ENCODE measurements at regions of chr15 and their contacts with region 1.

Region 1: DNA sequence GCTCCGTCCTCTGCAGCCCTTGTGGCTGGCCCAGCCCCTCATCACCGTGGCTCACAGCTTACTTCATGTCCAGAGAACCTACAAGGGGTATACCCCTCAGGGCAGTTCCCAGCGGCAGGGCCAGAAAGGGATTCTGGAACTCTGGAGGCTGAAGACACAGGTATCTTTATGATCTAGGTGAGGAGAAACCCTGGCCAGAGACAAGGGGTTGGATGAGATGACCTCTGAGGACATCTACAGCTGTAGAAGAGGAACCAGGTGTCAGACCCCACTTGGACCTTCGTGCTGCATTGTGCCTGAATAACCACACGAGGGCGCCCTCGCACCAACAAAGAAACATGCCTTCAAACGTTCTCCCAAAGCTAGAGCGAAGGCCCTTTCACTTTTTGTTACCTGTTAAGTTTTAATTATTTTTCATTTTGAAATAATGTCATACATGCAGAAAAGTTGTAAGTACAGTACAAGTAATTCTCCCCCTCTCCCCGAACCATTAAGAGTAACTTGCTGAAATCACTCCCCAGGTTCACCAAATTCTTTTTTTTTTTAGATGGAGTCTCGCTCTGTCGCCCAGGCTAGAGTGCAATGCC is 118.7 kb upstream of the SMAD3 start:
- DNase-seq: peak; percentile 83 to 92
- ATAC-seq: peak; percentile 72 to 77
- H3K4me3 ChIP-seq: no peak overlapping the region
- H3K27ac ChIP-seq: peak overlapping the region; percentile 60 to 82
- H3K4me1 ChIP-seq: peaks cover 39% of the 10 kb centered on the region
- CTCF ChIP-seq: peak; percentile 98
- EP300 ChIP-seq: no peak
- POLR2A ChIP-seq: no peak
- RAD21 ChIP-seq: peak; percentile 99

Region 2: DNA sequence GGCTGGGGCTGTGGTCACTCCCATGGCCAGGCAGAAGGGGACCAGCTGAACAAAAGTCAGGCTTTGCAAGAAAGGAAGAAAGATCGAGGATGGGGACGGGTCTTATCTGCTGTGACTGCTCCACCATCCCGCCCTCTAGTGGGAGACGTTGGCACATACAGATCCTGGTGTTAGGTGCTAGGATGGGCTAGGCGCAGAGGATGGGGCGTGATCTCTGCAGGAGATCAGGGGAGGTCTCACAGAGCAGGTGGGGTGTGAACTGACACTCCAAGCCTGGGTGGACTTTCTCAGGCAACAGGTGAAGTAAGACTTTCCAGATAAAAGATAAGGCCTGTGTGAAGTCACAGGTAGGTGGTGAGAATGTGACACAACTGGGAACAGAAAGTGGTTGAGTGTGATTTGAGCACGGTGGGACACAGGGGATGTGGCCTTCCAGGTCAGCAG is 23.2 kb before region 1 on chr15:
- CTCF ChIA-PET with region 1: interaction called, 18 read pairs
- POLR2A ChIA-PET with region 1: interaction called, 4 read pairs
- DNase-seq: peak; percentile 58 to 64
- ATAC-seq: peak; percentile 64 to 87; a peak in 3 of 6 replicates
- H3K4me3 ChIP-seq: no peak overlapping the region
- H3K27ac ChIP-seq: peak overlapping the region in 1 of 2 experiments; percentile 31; a peak in 2 of 6 replicates
- H3K4me1 ChIP-seq: peaks cover 16% of the 10 kb centered on the region
- CTCF ChIP-seq: peak; percentile 45; the same call in 2 of the 3 replicates
- EP300 ChIP-seq: no peak
- POLR2A ChIP-seq: no peak
- RAD21 ChIP-seq: peak; percentile 28 to 58; a peak in 4 of 5 replicates

Region 3: GRCh38 chr15:67013696-67014095 is 67.0 kb after region 1 on chr15:
- CTCF ChIA-PET with region 1: interaction called, 12 read pairs
- POLR2A ChIA-PET with region 1: no interaction called
- DNase-seq: no peak
- ATAC-seq: no peak
- H3K4me3 ChIP-seq: no peak overlapping the region
- H3K27ac ChIP-seq: no peak overlapping the region
- H3K4me1 ChIP-seq: peaks cover 12% of the 10 kb centered on the region; the same call in 1 of the 3 replicates
- CTCF ChIP-seq: no peak
- EP300 ChIP-seq: no peak
- POLR2A ChIP-seq: no peak
- RAD21 ChIP-seq: no peak

Region 4: DNA sequence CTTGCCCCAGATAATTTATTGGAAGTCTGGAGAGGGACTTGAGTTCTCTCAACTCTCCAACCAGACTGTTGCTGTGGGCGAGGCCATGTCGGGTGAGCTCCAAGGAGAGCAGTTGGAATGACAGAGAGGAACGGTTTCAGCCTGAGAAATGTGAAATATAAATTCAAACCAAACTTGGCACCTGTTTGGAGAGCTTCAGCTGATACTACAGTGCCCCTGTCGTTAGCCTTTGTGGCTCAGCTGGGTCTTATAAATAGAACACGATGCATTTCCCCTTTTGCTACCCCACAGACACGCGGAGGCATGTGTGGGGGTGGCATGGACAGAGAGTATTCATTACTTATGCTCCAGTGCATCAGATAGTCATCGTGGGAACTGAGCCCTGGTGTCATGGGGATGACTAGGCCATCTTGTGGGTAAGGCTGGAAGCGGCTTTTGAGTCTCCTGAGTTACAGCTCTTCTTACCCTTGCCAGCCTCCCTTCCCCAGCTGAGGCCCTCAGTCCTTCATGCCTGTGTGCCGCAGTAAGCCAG is 134.3 kb after region 1 on chr15:
- CTCF ChIA-PET with region 1: interaction called, 18 read pairs
- POLR2A ChIA-PET with region 1: no interaction called
- DNase-seq: peak in 1 of 2 experiments; percentile 71
- ATAC-seq: peak in 1 of 2 experiments; percentile 7; a peak in 2 of 6 replicates
- H3K4me3 ChIP-seq: no peak overlapping the region
- H3K27ac ChIP-seq: peak overlapping the region in 1 of 2 experiments; percentile 62; a peak in 4 of 6 replicates
- H3K4me1 ChIP-seq: peaks cover 99% of the 10 kb centered on the region
- CTCF ChIP-seq: peak; percentile 31; the same call in 2 of the 3 replicates
- EP300 ChIP-seq: no peak
- POLR2A ChIP-seq: no peak
- RAD21 ChIP-seq: peak in 1 of 2 experiments; percentile 32; a peak in 3 of 5 replicates

Region 5: DNA sequence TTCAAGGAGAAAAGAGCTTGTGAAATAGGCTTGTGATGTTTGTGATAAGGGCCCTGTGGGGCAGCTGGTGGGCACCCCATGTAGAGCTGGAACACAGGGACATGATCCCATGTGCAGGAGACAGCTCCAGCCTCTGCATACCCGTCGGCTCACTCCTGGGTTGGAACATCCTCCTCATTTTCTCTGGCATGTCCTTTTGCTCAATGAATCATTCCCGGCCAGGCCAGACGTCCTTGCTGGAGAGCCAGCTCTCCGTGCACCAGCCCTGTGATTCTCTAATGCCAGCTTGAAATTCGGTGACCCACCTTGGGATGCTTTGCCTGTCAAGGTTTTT is 196.1 kb after region 1 on chr15:
- CTCF ChIA-PET with region 1: interaction called, 28 read pairs
- POLR2A ChIA-PET with region 1: no interaction called
- DNase-seq: peak in 1 of 2 experiments; percentile 71
- ATAC-seq: peak; percentile 35 to 45
- H3K4me3 ChIP-seq: no peak overlapping the region
- H3K27ac ChIP-seq: peak overlapping the region; percentile 92
- H3K4me1 ChIP-seq: peaks cover 100% of the 10 kb centered on the region
- CTCF ChIP-seq: no peak
- EP300 ChIP-seq: no peak
- POLR2A ChIP-seq: no peak
- RAD21 ChIP-seq: no peak

Region 6: DNA sequence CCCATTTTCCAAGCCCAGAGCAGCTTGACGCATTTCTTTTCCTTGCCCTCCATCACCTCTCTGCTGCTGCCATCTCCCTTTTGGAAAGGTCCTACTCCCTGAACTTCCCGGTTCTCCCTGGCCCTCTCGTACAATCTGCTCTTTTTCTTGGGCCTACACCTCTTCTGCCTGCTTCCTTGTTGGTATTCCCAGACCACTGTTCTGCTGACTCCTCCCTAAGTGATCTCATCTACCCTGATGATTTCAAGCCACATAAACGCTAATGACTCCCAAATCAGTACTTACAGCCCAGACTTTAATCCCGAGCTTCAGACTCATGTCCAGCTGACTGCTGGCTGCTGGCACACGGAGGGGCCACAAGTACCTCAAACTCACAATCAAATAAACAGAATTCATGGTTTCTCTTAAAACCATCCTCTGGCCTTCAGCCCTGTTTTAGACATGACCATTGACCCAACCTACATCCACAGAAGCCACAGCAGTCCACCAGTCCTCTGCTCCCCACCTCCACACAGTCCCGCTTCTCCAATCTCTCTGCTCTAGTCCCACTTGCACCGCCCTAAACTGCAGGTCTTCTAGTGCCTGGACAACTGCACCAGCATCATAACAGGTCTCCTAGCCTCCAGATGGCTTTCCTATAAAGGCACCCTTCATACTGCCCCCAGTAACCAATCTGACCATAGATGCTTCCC is 250.1 kb after region 1 on chr15:
- CTCF ChIA-PET with region 1: interaction called, 63 read pairs
- POLR2A ChIA-PET with region 1: no interaction called
- DNase-seq: peak in 1 of 2 experiments; percentile 64
- ATAC-seq: peak; percentile 12 to 45; a peak in 4 of 6 replicates
- H3K4me3 ChIP-seq: no peak overlapping the region
- H3K27ac ChIP-seq: peak overlapping the region in 1 of 2 experiments; percentile 65; a peak in 3 of 6 replicates
- H3K4me1 ChIP-seq: peaks cover 29% of the 10 kb centered on the region
- CTCF ChIP-seq: no peak
- EP300 ChIP-seq: no peak
- POLR2A ChIP-seq: no peak
- RAD21 ChIP-seq: no peak